ENCODE measurements at regions of chr6 and their contacts with region 1.

Region 1: GRCh38 chr6:87210979-87211378 is 55.6 kb downstream of the ZNF292 start:
- DNase-seq: peak; percentile 61
- ATAC-seq: peak; percentile 99
- H3K4me3 Mint-ChIP-seq: no peak overlapping the region
- H3K27ac Mint-ChIP-seq: peak overlapping the region; percentile 71
- H3K4me1 Mint-ChIP-seq: peaks cover 73% of the 10 kb centered on the region
- H3K27me3 Mint-ChIP-seq: no peaks in the 10 kb centered on the region

Region 2: GRCh38 chr6:86657192-86657591 is 553.8 kb before region 1 on chr6:
- CTCF ChIA-PET with region 1: no interaction called
- POLR2A ChIA-PET with region 1: no interaction called
- intact Hi-C with region 1: no loop called
- DNase-seq: no peak
- ATAC-seq: no peak
- H3K4me3 Mint-ChIP-seq: no peak overlapping the region
- H3K27ac Mint-ChIP-seq: no peak overlapping the region
- H3K4me1 Mint-ChIP-seq: no peaks in the 10 kb centered on the region
- H3K27me3 Mint-ChIP-seq: no peaks in the 10 kb centered on the region

Region 3: DNA sequence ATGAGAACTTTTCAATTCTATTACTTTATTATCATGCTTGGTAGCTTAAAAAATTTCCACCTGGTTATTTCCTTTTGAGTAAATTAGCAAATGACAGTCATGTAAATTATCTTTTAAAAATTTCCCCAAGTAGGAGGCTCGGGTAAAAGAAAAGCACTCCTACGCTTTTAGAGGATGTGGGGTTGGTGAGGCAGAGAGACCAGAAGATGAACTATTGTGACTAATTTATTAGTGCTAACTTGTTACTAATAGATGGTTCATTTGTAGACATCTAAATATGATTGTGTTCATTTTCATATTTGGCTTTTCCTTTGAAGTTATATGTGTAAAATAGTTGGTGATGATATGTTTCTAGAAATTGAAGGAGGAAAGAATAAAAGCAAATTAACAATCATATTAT is 28.7 kb before region 1 on chr6:
- CTCF ChIA-PET with region 1: interaction called, 4 read pairs
- POLR2A ChIA-PET with region 1: no interaction called
- intact Hi-C with region 1: loop called in 1 of 2 experiments (anchors 1 kb)
- DNase-seq: peak; percentile 35
- ATAC-seq: peak; percentile 65
- H3K4me3 Mint-ChIP-seq: peak overlapping the region; percentile 15
- H3K27ac Mint-ChIP-seq: peak overlapping the region; percentile 81
- H3K4me1 Mint-ChIP-seq: peaks cover 84% of the 10 kb centered on the region
- H3K27me3 Mint-ChIP-seq: no peaks in the 10 kb centered on the region

Region 4: DNA sequence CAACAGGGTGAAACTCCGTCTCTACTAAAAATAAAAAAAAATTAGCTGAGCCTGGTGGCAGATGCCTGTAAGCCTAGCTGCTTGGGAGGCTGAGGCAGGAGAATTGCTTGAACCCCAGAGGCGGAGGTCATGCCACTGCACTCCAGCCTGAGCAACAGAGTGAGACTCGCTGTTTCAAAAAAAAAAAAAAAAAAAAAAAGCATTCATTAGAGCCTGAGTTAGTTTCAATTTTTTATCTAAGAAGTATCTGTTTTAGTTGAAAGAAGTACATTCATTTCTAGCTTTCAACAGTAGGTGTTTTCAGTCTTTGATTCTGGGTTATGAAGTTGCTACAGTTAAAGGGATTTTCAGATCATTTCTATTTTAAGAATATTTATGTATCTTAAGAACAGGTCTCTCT is 13.4 kb before region 1 on chr6:
- CTCF ChIA-PET with region 1: interaction called, 7 read pairs
- POLR2A ChIA-PET with region 1: interaction called, 5 read pairs
- intact Hi-C with region 1: loop called (anchors 1 to 2 kb)
- DNase-seq: peak; percentile 28
- ATAC-seq: peak; percentile 64
- H3K4me3 Mint-ChIP-seq: no peak overlapping the region
- H3K27ac Mint-ChIP-seq: no peak overlapping the region
- H3K4me1 Mint-ChIP-seq: peaks cover 81% of the 10 kb centered on the region
- H3K27me3 Mint-ChIP-seq: no peaks in the 10 kb centered on the region

Region 5: GRCh38 chr6:87261534-87261933 is 50.6 kb after region 1 on chr6:
- CTCF ChIA-PET with region 1: no interaction called
- POLR2A ChIA-PET with region 1: no interaction called
- intact Hi-C with region 1: no loop called
- DNase-seq: no peak
- ATAC-seq: no peak
- H3K4me3 Mint-ChIP-seq: no peak overlapping the region
- H3K27ac Mint-ChIP-seq: no peak overlapping the region
- H3K4me1 Mint-ChIP-seq: peaks cover 15% of the 10 kb centered on the region
- H3K27me3 Mint-ChIP-seq: no peaks in the 10 kb centered on the region

Region 6: GRCh38 chr6:87319271-87319987 is 108.5 kb after region 1 on chr6:
- CTCF ChIA-PET with region 1: no interaction called
- POLR2A ChIA-PET with region 1: no interaction called
- intact Hi-C with region 1: no loop called
- DNase-seq: no peak
- ATAC-seq: no peak
- H3K4me3 Mint-ChIP-seq: no peak overlapping the region
- H3K27ac Mint-ChIP-seq: no peak overlapping the region
- H3K4me1 Mint-ChIP-seq: peaks cover 14% of the 10 kb centered on the region
- H3K27me3 Mint-ChIP-seq: peaks cover 6% of the 10 kb centered on the region